Activated CD8-positive, alpha-beta memory T cell treated with anti-CD3 and anti-CD28 coated beads, Interleukin-2, amount 10 ng/mL, durations not matched to agents 7 days and 5 days (primary cell): ENCODE measurements at regions of chr1 and their contacts with region 1.

Region 1: GRCh38 chr1:230310381-230311163 is 115.6 kb downstream of the PGBD5 start:
- DNase-seq: peak; percentile 72
- ATAC-seq: peak; percentile 69
- H3K4me3 Mint-ChIP-seq: no peak overlapping the region
- H3K27ac Mint-ChIP-seq: no peak overlapping the region
- H3K4me1 Mint-ChIP-seq: peaks cover 11% of the 10 kb centered on the region
- H3K27me3 Mint-ChIP-seq: peaks cover 8% of the 10 kb centered on the region

Region 2: DNA sequence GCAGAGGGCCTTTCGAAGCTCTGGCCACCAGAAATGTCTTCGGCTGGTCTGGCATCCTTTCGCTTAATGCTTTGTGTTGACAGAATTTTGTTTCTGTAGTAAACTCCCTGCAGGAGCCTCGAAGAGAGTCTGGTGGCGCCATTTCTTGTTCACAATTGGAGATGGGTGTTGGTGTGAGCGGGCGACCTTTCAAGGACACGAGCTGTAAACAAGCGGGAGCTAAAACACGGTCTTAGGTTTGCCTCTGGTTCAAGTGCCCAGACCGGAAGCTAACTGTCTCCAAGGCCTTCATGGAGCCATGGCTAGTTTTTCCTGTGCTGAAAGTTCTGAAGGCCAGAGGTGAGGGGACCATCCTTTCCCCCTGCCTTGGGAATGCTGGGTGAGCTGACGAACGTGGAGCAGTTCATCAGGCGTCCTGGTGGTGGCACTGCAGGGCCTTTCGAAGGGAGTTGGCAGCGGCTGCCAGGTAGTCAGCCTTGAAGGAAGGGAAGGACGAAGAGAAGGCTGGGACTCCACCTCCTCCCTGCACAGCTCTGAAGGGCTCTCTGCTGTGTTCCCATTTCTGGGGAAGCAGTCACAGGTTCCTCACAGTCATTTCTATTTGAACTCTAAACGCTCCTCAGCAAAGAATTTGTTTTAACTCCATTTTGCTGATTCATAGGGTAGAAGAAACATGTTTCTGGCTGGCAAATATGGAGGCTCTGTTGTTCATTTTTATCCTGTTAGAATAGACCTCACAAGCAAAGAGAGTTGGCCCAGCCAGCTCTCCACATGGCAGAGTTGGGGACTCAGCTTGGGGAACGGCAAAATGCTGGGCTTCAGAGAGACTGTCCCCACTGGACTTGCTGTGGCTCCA is 649.3 kb before region 1 on chr1:
- CTCF ChIA-PET with region 1: interaction called, 14 read pairs
- DNase-seq: peak; percentile 75
- ATAC-seq: peak; percentile 78
- H3K4me3 Mint-ChIP-seq: no peak overlapping the region
- H3K27ac Mint-ChIP-seq: no peak overlapping the region
- H3K4me1 Mint-ChIP-seq: peaks cover 5% of the 10 kb centered on the region
- H3K27me3 Mint-ChIP-seq: no peaks in the 10 kb centered on the region